Right ventricle myocardium inferior (tissue), 1 donor: ENCODE measurements at regions of chr3 and their contacts with region 1.

Region 1: GRCh38 chr3:127672516-127673190 is at the start of gene ABTB1:
- DNase-seq: peak; percentile 96
- ATAC-seq: peak; percentile 90
- total RNA-seq, gene ABTB1: 31.7 TPM

Region 2: DNA sequence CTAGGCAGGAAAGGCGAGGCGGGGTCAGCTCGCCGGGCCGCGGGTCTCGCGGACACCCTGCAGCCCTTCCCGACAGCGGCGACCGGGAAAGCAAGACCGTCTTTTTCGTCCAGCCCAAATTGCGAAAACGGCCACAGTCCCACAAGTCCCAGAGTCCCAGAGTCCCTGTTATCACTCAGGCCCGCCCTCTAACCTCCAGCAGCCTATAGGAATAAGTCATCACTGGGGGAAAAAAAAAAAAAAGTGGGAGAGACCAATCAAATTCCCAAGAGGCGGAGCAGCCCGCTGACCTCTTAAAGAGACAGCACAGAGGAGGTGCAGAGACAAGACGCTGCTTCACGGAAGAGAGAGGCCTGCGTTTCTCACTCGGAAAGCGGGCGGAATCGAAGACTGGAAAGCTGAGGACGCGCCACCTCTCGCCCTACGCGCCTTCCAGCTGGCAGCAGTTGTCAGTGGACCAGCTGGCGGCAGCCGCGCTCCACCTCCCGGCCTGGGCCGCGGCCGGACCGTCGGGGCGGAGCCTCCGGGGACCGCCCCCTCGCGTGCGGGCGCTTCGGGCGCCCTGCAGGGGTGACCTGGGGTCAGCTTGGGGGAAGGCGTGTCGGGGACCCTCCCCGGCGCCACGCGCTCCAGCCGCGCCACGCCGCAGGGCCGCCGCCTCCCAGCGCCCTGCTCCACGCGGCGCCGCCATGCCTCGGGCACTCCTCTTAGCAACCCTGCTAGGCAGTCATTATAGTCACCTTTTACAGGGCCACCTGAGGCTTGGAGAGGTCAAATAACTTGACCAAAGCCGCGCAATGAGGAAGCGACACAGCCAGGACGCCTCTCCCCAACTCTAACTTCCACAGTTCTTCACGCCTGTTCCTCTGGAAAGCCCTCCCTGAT is 81.8 kb before region 1 on chr3 and contains the start of gene TPRA1:
- intact Hi-C with region 1: loop called (anchors 5 kb)
- DNase-seq: peak; percentile 96
- ATAC-seq: peak; percentile 94
- total RNA-seq, gene TPRA1: 21.3 TPM

Region 3: GRCh38 chr3:127612966-127613365 is 59.7 kb before region 1 on chr3:
- intact Hi-C with region 1: no loop called
- DNase-seq: no peak
- ATAC-seq: no peak